AG04449 (cell line): ENCODE measurements at regions of chr13 and their contacts with region 1.

Region 1: DNA sequence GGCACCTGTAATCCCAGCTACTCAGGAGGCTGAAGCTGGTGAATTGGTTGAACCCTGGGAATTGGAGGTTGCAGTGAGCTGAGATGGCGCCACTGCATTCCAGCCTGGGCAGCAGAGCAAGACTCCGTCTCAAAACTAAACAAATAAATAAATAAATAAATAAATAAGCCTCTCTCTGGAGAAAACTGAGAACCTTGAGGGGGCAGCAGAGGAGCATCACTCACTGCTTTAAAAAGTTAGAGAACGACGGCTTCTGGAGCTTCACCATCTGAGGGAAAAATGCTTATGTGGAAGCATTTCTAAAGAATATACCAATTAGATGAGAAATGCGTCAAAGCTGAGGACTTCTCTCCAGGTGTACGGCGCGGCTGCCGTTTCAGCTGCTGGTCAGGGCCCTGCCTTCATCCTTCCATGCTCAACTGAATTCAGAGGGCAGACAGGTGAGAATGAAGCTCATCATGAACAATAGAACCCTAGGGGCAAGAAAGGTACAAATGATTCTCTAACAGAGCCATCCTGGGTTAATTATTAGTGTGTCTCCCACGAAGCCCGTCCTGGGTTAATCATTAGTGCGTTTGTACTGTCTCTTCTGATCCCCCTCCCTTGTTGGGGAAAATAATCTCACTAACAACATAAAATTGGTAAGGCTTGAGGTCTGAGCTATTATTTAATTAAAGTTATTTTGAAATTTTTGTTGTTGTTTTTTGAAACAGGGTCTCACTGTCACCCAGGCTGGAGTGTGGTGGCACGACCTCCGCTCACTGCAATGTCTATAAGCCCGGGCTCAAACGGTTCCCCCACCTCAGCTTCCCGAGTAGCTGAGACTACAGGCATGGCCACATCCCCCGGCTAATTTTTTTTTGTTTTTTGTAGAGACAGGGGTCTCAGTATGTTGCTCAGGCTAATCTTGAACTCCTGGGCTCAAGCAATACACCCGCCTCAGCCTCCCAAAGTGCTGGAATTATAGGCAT is 80.1 kb downstream of the IPO5 start:
- DNase-seq: peak; percentile 19
- H3K4me3 ChIP-seq: no peak overlapping the region
- CTCF ChIP-seq: peak; percentile 35

Region 2: GRCh38 chr13:98044301-98044700 is 10.7 kb after region 1 on chr13:
- CTCF ChIA-PET with region 1: interaction called, 12 read pairs
- POLR2A ChIA-PET with region 1: no interaction called
- DNase-seq: no peak
- H3K4me3 ChIP-seq: no peak overlapping the region
- CTCF ChIP-seq: no peak

Region 3: DNA sequence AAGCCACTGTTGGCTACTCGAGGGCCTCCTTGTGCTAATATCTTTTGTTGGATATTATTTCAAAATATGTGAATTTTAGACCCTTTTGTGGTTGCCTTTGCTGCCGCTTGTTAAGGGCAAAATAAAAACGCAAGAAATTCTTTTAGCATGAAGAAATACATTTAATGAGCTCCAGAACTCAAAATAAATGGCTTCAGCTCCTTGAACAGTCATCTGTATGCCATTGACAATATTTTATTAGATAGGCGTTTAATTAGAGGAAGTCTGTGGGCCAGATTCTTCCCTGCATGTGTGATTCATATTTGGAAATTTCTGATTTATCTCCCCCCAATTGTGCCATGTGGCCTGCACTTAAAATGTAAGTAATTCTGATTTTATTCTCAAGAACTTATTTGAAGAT is 366.2 kb after region 1 on chr13:
- CTCF ChIA-PET with region 1: interaction called, 10 read pairs
- POLR2A ChIA-PET with region 1: no interaction called
- DNase-seq: peak; percentile 59
- H3K4me3 ChIP-seq: no peak overlapping the region
- CTCF ChIP-seq: no peak

Region 4: GRCh38 chr13:98445340-98446233 is 412.0 kb after region 1 on chr13:
- CTCF ChIA-PET with region 1: interaction called, 10 read pairs
- POLR2A ChIA-PET with region 1: no interaction called
- DNase-seq: no peak
- H3K4me3 ChIP-seq: no peak overlapping the region
- CTCF ChIP-seq: peak; percentile 98